Breast epithelium (tissue), 4 donors: ENCODE measurements at regions of chr12 and their contacts with region 1.

Region 1: DNA sequence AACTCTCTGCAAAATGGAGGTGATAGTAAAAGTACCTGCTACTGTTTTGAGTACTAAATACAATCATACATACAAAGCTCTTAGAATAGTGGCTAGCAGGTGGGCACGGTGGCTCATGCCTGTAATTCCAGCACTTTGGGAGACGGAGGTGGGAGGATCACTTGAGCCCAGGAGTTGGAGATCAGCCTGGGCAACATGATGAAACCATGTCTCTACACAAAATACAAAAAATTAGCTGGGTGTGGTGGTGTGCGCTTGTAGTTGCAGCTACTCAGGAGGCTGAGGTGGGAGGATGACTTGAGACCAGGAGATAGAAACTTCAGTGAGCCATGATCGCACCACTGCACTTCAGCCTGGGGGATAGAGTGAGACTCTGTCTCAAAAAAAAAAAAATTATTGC is 28.8 kb upstream of the APPL2 start:
- DNase-seq: no peak
- H3K4me3 ChIP-seq: no peak overlapping the region
- H3K27ac ChIP-seq: no peak overlapping the region
- H3K4me1 ChIP-seq: no peaks in the 10 kb centered on the region
- H3K27me3 ChIP-seq: no peaks in the 10 kb centered on the region
- CTCF ChIP-seq: no peak
- POLR2A ChIP-seq: no peak

Region 2: GRCh38 chr12:105204916-105205315 is 59.9 kb before region 1 on chr12:
- intact Hi-C with region 1: loop called (anchors 2 kb)
- DNase-seq: no peak
- H3K4me3 ChIP-seq: no peak overlapping the region
- H3K27ac ChIP-seq: no peak overlapping the region
- H3K4me1 ChIP-seq: no peaks in the 10 kb centered on the region
- H3K27me3 ChIP-seq: no peaks in the 10 kb centered on the region
- CTCF ChIP-seq: no peak
- POLR2A ChIP-seq: no peak